ENCODE measurements at regions of chr19 and their contacts with region 1.

Region 1: GRCh38 chr19:37906869-37907734 is at the start of gene SIPA1L3:
- DNase-seq: peak; percentile 97
- ATAC-seq: peak; percentile 92
- H3K4me3 Mint-ChIP-seq: peak within 1 kb of the TSS; percentile 90
- H3K27ac Mint-ChIP-seq: peak within 1 kb of the TSS; percentile 98
- H3K4me1 Mint-ChIP-seq: peaks cover 38% of the 10 kb centered on the region
- H3K27me3 Mint-ChIP-seq: no peaks in the 10 kb centered on the region; the same call in 1 of the 2 replicates
- CTCF ChIP-seq: no peak
- total RNA-seq, gene SIPA1L3: 41.5 to 44.4 TPM (median 42.4 TPM) in 3 replicates

Region 2: DNA sequence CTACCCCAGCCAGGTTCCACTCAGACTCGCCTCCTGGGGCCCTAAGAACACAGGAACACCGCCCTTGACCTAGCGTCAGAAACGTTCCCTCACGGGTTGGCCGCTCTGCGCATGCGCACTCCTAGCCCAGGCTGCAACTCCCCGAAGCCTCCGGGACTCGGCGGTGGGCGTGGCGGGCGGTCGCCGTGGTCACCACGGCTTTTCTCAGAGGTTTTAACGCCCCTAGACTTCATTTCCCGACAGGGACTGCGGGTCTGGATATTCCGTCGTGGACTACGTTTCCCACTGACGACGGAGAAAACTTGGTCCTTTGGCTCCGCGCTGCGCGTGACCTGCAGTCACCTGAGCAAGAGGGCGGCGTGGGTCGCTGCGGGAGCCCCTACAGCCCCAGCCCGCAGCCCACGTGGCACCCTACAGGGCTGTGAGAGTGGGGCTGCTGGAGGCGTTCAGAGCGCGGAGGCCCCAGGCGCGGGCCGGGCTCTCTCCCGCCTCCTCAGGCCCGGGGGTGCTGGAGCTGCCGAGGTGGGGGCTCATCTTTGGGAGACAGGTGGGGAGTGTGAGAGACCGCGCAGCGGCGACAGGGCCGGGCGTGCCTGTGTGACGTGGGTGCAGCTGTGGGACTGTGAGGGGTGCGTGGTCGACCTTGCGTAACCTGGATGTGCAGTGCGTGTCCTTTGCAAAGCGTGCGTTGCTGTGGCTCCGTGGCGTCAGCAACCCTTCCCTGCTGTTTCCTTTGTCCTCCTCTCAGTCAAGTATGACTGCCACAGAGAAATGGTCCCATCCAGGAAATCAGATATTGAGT is 89.7 kb before region 1 on chr19:
- CTCF ChIA-PET with region 1: no interaction called
- POLR2A ChIA-PET with region 1: no interaction called
- DNase-seq: peak; percentile 95
- ATAC-seq: peak; percentile 94
- H3K4me3 Mint-ChIP-seq: peak overlapping the region; percentile 85
- H3K27ac Mint-ChIP-seq: no peak overlapping the region
- H3K4me1 Mint-ChIP-seq: peaks cover 10% of the 10 kb centered on the region
- H3K27me3 Mint-ChIP-seq: peaks cover 16% of the 10 kb centered on the region
- CTCF ChIP-seq: no peak

Region 3: DNA sequence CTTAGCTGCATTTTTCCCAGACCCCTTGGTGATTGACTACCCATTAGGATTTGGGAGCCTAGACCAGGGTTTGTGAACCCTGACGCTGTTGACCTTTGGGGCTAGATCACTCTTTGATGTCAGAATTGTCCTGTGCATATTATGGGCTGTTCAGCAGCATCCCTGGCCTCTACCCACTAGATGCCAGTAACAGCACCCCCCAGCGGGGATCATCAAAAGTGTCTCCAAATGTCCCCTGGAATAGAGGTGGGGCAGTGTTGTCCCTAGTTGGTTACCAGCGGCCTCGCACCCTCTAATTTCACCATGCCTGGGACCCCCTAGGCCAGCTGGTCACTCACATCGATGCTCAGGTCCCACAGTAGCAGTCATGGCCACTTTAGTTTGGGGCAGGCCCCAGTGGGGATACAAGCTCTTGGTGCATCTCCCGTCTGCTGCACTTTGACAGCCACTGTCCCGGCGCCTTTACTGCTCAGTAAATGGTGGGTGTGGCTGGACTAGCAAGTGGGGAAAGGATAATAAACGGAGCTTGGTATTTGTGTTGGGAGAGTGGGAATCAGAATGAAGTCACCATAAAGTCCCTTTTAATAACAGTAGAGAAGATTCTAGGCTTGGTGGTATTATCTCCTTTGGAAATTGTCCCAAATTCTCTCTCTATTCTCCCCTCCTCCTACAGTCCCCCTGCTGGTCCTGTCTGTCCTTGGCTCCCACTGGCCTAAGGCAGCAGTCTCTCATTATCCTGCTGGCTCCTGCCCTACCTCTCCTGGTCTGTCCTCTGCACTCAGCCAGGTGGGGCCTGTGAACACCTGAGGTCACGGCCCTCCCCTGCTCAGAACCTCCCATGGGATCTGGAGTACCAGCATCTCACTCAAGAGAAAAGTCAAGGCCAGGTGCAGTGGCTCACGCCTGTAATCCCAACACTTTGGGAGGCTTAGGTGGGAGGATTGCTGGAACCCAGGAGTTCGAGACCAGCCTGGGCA is 80.5 kb after region 1 on chr19:
- CTCF ChIA-PET with region 1: interaction called, 39 read pairs
- POLR2A ChIA-PET with region 1: interaction called, 12 read pairs
- DNase-seq: peak; percentile 75
- ATAC-seq: peak; percentile 40
- H3K4me3 Mint-ChIP-seq: no peak overlapping the region
- H3K27ac Mint-ChIP-seq: no peak overlapping the region; the same call in 1 of the 2 replicates
- H3K4me1 Mint-ChIP-seq: peaks cover 59% of the 10 kb centered on the region
- H3K27me3 Mint-ChIP-seq: no peaks in the 10 kb centered on the region
- CTCF ChIP-seq: peak; percentile 54

Region 4: GRCh38 chr19:38019396-38019724 is 112.3 kb after region 1 on chr19:
- CTCF ChIA-PET with region 1: interaction called, 10 read pairs
- POLR2A ChIA-PET with region 1: no interaction called
- DNase-seq: no peak
- ATAC-seq: peak; percentile 72
- H3K4me3 Mint-ChIP-seq: no peak overlapping the region
- H3K27ac Mint-ChIP-seq: no peak overlapping the region
- H3K4me1 Mint-ChIP-seq: peaks cover 17% of the 10 kb centered on the region
- H3K27me3 Mint-ChIP-seq: no peaks in the 10 kb centered on the region
- CTCF ChIP-seq: no peak

Region 5: DNA sequence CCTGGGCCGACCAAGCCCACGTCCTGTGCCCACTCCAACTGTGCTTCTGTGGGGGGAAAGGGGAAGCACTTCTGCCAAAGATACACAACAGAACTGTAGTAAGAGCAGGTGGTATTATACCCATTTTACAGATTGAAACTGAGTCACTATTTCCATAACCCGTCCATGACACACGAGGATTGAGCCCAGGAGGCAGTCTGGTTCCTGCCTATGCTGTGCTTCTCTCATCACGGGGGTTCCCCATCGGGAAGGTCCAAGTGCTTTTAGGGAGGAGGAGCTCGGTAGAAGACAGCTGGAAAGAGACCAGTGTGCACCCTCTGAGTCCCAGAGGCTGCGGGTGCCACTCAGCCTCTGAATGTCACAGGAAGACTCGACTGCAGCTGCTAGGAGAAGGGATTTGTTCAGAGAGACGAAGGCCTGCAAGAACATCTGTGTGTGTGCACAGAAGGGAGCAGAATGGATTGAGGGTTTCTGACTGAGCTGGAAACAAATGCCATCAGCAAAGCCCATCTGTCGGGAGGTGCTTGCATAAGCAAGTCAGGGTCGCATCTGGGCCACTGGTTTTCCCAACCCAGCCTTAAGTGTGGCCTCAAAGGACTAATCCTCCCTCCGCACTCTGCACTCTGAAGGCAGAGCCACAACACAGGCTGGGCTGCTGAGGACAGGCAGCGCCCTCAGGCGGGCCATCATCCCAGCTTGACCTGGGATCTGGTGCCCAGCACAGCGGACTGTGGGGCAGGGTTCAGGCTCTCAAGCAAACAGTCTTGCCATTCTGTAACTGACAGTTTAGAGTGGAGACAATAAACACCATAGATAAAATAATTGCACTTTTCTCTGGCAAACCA is 167.0 kb after region 1 on chr19:
- CTCF ChIA-PET with region 1: interaction called, 12 read pairs
- POLR2A ChIA-PET with region 1: interaction called, 4 read pairs
- DNase-seq: peak; percentile 73
- ATAC-seq: peak; percentile 97
- H3K4me3 Mint-ChIP-seq: no peak overlapping the region
- H3K27ac Mint-ChIP-seq: peak overlapping the region; percentile 92
- H3K4me1 Mint-ChIP-seq: peaks cover 9% of the 10 kb centered on the region
- H3K27me3 Mint-ChIP-seq: no peaks in the 10 kb centered on the region
- CTCF ChIP-seq: no peak

Region 6: DNA sequence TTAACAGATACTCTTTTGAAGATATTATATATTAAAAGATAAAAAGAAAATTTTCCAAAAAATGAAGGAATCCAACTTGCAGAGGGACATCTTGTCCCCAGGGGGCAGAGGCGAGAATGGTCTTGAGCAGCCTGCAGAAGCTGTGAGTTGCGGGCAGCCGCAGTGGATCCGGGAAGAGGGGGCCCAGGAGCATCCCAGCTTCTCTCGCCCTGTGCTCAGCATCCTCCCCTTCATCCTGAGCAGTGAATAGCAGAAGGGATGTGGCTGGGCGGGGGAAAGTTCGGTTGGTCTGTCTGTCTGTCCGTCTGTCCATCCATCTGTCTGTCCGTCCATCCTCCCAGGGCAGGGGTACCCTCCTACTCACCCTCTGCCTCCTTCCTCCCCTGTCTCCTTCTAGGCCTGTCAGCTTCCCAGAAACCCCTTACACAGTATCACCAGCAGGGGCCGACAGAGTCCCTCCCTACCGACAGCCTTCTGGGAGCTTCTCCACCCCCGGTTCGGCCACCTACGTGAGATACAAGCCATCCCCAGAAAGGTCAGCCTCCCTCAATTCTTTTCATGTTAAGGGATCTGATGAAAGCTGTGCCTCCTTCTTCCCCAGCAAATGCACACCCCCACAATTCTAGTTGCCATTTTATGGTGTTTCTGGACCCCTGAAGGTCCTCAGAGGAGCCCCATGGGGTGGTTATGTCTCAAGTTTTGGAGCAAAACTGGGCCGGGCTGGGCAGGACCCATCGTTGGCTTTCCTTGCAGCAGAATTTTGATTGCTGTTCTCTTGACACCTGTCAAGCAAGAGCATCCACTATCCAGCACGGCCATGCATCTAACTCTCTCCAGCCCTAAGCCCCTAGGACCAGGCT is 235.3 kb after region 1 on chr19:
- CTCF ChIA-PET with region 1: interaction called, 75 read pairs
- POLR2A ChIA-PET with region 1: interaction called, 3 read pairs
- DNase-seq: peak; percentile 87
- ATAC-seq: peak; percentile 95
- H3K4me3 Mint-ChIP-seq: no peak overlapping the region
- H3K27ac Mint-ChIP-seq: no peak overlapping the region
- H3K4me1 Mint-ChIP-seq: no peaks in the 10 kb centered on the region
- H3K27me3 Mint-ChIP-seq: no peaks in the 10 kb centered on the region
- CTCF ChIP-seq: peak; percentile 52

Region 7: GRCh38 chr19:38245826-38246498 is 338.9 kb after region 1 on chr19:
- CTCF ChIA-PET with region 1: no interaction called
- POLR2A ChIA-PET with region 1: interaction called, 12 read pairs
- DNase-seq: no peak
- ATAC-seq: no peak
- H3K4me3 Mint-ChIP-seq: no peak overlapping the region
- H3K27ac Mint-ChIP-seq: 0 out of 2 replicates have a peak overlapping the region, but pooled peaks have one; percentile 3
- H3K4me1 Mint-ChIP-seq: peaks cover 17% of the 10 kb centered on the region
- H3K27me3 Mint-ChIP-seq: peaks cover 2% of the 10 kb centered on the region; the same call in 1 of the 2 replicates
- CTCF ChIP-seq: no peak